B cell (primary cell): ENCODE measurements at regions of chr7 and their contacts with region 1.

Region 1: DNA sequence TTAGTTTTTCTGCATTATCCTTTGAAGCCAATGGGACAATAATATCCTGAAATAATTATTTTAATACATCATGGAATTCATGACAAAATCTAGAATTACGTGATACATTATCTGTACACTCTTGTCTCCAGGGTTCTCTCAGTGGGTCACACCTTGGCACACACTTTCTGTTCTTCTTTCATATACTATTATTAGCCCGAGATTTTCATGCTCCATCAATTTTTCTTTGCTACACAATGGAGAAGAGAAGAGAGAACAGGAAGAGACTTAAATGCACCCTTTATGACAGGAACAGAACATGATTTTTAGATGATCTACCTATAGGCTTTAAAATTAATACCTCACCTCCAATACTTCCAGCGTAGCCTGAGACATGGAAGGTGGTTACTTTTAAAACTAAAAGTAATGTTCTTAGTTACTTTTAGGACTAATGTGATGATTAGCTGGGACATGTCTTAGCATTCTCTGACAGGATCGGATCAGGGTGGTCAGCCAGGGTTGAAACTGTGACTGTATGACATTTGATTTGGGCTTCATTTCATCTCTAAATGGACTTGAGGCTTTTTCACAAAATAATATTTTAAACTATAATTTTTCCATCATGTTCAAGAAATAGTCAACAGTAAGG is 148.2 kb upstream of the WNT16 start:
- DNase-seq: peak; percentile 83
- ATAC-seq: peak; percentile 87
- H3K4me3 ChIP-seq: peak overlapping the region in 2 of 5 experiments; percentile 11 to 31
- H3K4me3 Mint-ChIP-seq: peak overlapping the region; percentile 52
- H3K27ac ChIP-seq: peak overlapping the region; percentile 90 to 93
- H3K27ac Mint-ChIP-seq: peak overlapping the region; percentile 69
- H3K4me1 ChIP-seq: peaks cover 61 to 77% of the 10 kb centered on the region in 2 donors
- H3K4me1 Mint-ChIP-seq: peaks cover 71% of the 10 kb centered on the region
- H3K27me3 ChIP-seq: no peaks in the 10 kb centered on the region
- H3K27me3 Mint-ChIP-seq: no peaks in the 10 kb centered on the region
- CTCF ChIP-seq: no peak

Region 2: GRCh38 chr7:121138262-121138933 is 42.2 kb before region 1 on chr7:
- CTCF ChIA-PET with region 1: no interaction called
- POLR2A ChIA-PET with region 1: interaction called, 4 read pairs
- intact Hi-C with region 1: loop called (anchors 1 kb)
- DNase-seq: peak; percentile 74
- ATAC-seq: peak; percentile 97
- H3K4me3 ChIP-seq: peak overlapping the region; percentile 46 to 84 (median 59)
- H3K4me3 Mint-ChIP-seq: peak overlapping the region; percentile 97
- H3K27ac ChIP-seq: peak overlapping the region; percentile 76 to 91
- H3K27ac Mint-ChIP-seq: peak overlapping the region; percentile 98
- H3K4me1 ChIP-seq: peaks cover 21 to 25% of the 10 kb centered on the region in 2 donors
- H3K4me1 Mint-ChIP-seq: peaks cover 34% of the 10 kb centered on the region
- H3K27me3 ChIP-seq: no peaks in the 10 kb centered on the region
- H3K27me3 Mint-ChIP-seq: no peaks in the 10 kb centered on the region
- CTCF ChIP-seq: no peak

Region 3: GRCh38 chr7:121204537-121204936 is 24.0 kb after region 1 on chr7:
- CTCF ChIA-PET with region 1: interaction called, 6 read pairs
- POLR2A ChIA-PET with region 1: interaction called, 5 read pairs
- intact Hi-C with region 1: loop called (anchors 2 kb)
- DNase-seq: no peak
- ATAC-seq: no peak
- H3K4me3 ChIP-seq: no peak overlapping the region
- H3K4me3 Mint-ChIP-seq: no peak overlapping the region
- H3K27ac ChIP-seq: no peak overlapping the region
- H3K27ac Mint-ChIP-seq: no peak overlapping the region
- H3K4me1 ChIP-seq: peaks cover 31 to 36% of the 10 kb centered on the region in 2 donors
- H3K4me1 Mint-ChIP-seq: peaks cover 45% of the 10 kb centered on the region
- H3K27me3 ChIP-seq: no peaks in the 10 kb centered on the region
- H3K27me3 Mint-ChIP-seq: no peaks in the 10 kb centered on the region
- CTCF ChIP-seq: no peak

Region 4: DNA sequence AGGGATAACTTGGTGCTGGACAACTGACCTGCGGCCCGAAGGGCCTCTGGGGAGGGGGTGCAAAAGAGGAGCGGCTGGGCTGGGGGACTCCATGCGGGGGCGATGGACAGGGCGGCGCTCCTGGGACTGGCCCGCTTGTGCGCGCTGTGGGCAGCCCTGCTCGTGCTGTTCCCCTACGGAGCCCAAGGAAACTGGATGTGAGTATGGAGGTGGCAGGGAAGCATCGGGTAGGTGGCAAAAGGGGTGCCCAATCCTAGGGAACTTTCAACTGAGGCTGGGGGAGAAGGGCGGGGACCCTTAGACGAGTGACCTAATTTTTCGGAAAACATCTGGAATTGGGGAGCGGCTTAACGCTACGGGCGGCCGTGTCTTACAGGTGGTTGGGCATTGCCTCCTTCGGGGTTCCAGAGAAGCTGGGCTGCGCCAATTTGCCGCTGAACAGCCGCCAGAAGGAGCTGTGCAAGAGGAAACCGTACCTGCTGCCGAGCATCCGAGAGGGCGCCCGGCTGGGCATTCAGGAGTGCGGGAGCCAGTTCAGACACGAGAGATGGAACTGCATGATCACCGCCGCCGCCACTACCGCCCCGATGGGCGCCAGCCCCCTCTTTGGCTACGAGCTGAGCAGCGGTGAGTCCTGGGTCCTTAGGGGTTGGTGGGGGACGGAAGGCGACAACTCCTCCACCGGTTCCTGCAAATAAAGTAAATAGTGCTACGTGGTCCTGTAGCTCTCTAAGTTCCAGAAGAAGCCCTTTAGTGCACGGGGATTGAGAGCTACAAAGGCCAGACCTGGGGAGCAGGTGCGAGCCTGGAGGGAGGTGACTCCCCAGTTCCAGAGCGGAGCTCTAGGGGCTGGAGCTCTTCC is 148.9 kb after region 1 on chr7:
- CTCF ChIA-PET with region 1: interaction called, 5 read pairs
- POLR2A ChIA-PET with region 1: interaction called, 7 read pairs
- intact Hi-C with region 1: loop called (anchors 2 kb)
- DNase-seq: peak; percentile 65
- ATAC-seq: peak; percentile 49
- H3K4me3 ChIP-seq: peak overlapping the region; percentile 54 to 97 (median 86)
- H3K4me3 Mint-ChIP-seq: peak overlapping the region; percentile 91
- H3K27ac ChIP-seq: peak overlapping the region; percentile 25 to 32
- H3K27ac Mint-ChIP-seq: peak overlapping the region; percentile 92
- H3K4me1 ChIP-seq: peaks cover 20 to 21% of the 10 kb centered on the region in 2 donors
- H3K4me1 Mint-ChIP-seq: peaks cover 46% of the 10 kb centered on the region
- H3K27me3 ChIP-seq: peaks cover 0 to 3% (median 0%) of the 10 kb centered on the region in 4 experiments
- H3K27me3 Mint-ChIP-seq: peaks cover 13% of the 10 kb centered on the region
- CTCF ChIP-seq: peak; percentile 26

Region 5: DNA sequence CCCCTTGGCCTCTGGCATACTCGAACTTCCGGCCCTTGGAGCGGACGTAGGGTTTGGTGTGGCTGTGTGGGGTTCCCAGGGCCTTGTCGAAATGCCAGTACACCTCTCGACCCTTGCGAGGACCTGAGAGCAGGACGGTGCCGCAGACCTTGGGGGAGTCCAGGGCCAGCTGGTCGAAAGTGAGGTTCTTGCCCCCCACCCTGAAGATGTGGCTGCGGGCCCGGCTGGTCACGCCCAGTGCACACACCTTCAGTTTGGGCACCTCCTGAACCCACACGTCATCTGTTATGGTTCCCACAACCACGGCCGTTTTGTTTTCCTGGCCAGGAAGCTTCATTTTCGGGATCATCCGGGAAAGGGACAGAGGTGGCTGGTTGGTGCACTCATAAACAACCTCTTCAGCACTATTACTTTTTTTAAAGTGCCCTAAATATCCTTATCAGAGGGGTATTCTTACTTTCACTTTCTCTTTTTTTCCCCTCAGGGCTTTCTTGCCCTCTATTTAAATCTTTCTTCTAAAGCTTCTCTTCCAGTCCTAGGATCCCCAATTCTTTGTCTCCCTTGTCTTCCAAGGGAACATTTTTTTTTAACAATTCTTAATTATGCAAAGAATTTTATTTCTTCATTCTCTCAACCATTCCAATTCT is 260.4 kb after region 1 on chr7:
- CTCF ChIA-PET with region 1: no interaction called
- POLR2A ChIA-PET with region 1: no interaction called
- intact Hi-C with region 1: loop called (anchors 1 kb)
- DNase-seq: peak; percentile 40
- ATAC-seq: peak; percentile 39
- H3K4me3 ChIP-seq: peak overlapping the region in 4 of 5 experiments; percentile 7 to 39 (median 27)
- H3K4me3 Mint-ChIP-seq: peak overlapping the region; percentile 78
- H3K27ac ChIP-seq: peak overlapping the region; percentile 44 to 51
- H3K27ac Mint-ChIP-seq: peak overlapping the region; percentile 85
- H3K4me1 ChIP-seq: peaks cover 19 to 30% of the 10 kb centered on the region in 2 donors
- H3K4me1 Mint-ChIP-seq: peaks cover 36% of the 10 kb centered on the region
- H3K27me3 ChIP-seq: no peaks in the 10 kb centered on the region
- H3K27me3 Mint-ChIP-seq: no peaks in the 10 kb centered on the region
- CTCF ChIP-seq: no peak